ENCODE measurements at regions of chr14 and their contacts with region 1.

Region 1: GRCh38 chr14:68248481-68249255 is 429.1 kb downstream of the RAD51B start:
- DNase-seq: peak; percentile 10
- H3K4me3 Mint-ChIP-seq: no peak overlapping the region
- H3K27ac Mint-ChIP-seq: peak overlapping the region; percentile 77
- H3K4me1 Mint-ChIP-seq: peaks cover 70% of the 10 kb centered on the region
- H3K27me3 Mint-ChIP-seq: no peaks in the 10 kb centered on the region
- CTCF ChIP-seq: peak; percentile 42

Region 2: GRCh38 chr14:68084256-68084655 is 164.4 kb before region 1 on chr14:
- CTCF ChIA-PET with region 1: no interaction called
- intact Hi-C with region 1: loop called (anchors 5 kb)
- DNase-seq: peak; percentile 22
- H3K4me3 Mint-ChIP-seq: no peak overlapping the region
- H3K27ac Mint-ChIP-seq: no peak overlapping the region
- H3K4me1 Mint-ChIP-seq: peaks cover 34% of the 10 kb centered on the region
- H3K27me3 Mint-ChIP-seq: no peaks in the 10 kb centered on the region
- CTCF ChIP-seq: peak; percentile 15

Region 3: GRCh38 chr14:68369281-68370056 is 120.8 kb after region 1 on chr14:
- CTCF ChIA-PET with region 1: no interaction called
- intact Hi-C with region 1: loop called (anchors 5 kb)
- DNase-seq: no peak
- H3K4me3 Mint-ChIP-seq: no peak overlapping the region
- H3K27ac Mint-ChIP-seq: no peak overlapping the region
- H3K4me1 Mint-ChIP-seq: peaks cover 10% of the 10 kb centered on the region
- H3K27me3 Mint-ChIP-seq: no peaks in the 10 kb centered on the region
- CTCF ChIP-seq: no peak

Region 4: DNA sequence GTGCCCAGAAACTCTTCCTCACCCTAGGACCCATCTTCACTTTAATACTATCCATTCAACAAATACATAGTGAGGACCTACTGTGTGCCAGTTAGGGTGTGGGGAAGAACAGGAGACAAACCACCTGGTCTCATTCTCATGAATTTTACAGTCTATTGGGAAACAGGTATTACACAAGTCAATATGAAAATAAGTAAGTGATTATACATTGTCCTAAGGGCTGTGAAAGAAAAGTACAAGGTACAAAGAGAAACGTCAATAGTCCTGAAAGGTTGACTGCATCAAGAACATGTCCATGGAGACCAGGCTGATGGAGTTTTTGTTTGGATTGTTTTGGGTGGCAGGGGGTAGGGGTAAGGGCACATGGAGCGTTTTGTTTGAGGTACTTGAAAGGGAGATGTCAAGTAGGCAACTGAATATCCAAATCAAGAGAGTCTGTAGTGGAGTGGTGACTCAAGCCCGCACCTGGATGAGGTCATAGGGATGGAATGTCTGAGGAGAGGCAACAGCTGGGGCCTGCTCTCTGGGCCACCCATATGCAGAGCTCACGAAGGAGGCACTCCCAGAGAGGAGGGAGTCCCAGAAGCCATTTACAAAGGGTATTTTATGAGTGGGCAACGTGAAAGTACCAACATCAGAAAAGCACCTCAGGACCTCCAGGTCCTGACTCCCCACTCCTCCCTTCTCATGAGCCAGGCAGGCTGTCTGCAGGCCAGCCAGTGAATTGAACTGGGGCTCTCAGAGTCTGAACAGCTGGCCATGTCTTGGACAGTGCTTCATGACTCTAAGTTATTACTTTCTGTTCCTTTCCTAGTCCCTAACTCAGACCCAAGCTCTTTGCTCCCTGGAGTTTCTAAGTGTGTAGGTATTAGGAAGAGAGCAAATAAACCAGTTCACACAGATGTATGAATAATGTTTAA is 272.2 kb after region 1 on chr14:
- CTCF ChIA-PET with region 1: interaction called, 3 read pairs
- intact Hi-C with region 1: loop called (anchors 1 kb)
- DNase-seq: peak; percentile 85
- H3K4me3 Mint-ChIP-seq: peak overlapping the region; percentile 34
- H3K27ac Mint-ChIP-seq: peak overlapping the region; percentile 86
- H3K4me1 Mint-ChIP-seq: peaks cover 47% of the 10 kb centered on the region
- H3K27me3 Mint-ChIP-seq: no peaks in the 10 kb centered on the region
- CTCF ChIP-seq: no peak

Region 5: DNA sequence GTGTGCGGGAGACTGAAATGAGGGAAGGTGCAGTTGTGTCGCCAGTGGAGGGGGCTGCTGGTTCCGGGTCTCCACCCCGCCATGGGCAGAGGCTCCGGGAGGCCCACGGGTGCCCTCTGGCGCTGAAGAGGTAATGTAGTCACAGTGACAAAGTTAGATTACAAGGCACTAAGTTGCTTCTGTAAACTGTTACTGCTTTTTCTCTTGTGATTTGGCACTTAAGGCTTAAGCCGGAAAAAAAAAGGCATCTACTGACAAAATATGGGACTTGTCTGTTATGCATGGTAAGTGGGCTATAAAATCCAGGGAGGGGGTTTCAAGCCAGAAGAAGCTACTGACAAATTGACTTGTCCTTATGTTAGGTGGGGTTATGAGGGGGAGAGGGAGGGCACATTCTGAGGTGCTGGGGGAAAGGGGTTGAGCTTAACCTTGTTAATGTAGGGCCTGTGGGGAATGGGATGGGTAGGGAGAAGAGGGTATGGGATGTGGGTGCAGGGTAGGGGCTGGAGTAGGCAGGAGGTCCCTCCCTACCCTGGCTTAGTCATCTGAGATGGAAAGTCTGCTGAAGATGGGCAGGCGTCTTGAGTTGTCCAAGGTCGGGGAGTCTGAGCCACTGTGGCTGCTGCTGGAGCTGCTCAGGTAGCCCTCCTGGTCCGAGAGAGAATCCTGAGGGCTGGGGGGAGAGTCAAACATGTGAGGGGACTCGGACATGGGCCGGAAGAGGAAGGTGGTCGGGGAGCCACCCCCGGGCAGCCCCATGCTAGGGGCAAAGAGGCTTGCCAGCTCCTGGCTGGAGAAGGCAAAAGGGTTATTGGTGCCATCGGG is 540.5 kb after region 1 on chr14:
- CTCF ChIA-PET with region 1: interaction called, 4 read pairs
- intact Hi-C with region 1: loop called (anchors 1 kb)
- DNase-seq: peak; percentile 91
- H3K4me3 Mint-ChIP-seq: peak overlapping the region; percentile 85
- H3K27ac Mint-ChIP-seq: peak overlapping the region; percentile 81
- H3K4me1 Mint-ChIP-seq: peaks cover 27% of the 10 kb centered on the region
- H3K27me3 Mint-ChIP-seq: no peaks in the 10 kb centered on the region
- CTCF ChIP-seq: peak; percentile 49